Colonic mucosa (tissue), 4 donors: ENCODE measurements at regions of chr19 and their contacts with region 1.

Region 1: DNA sequence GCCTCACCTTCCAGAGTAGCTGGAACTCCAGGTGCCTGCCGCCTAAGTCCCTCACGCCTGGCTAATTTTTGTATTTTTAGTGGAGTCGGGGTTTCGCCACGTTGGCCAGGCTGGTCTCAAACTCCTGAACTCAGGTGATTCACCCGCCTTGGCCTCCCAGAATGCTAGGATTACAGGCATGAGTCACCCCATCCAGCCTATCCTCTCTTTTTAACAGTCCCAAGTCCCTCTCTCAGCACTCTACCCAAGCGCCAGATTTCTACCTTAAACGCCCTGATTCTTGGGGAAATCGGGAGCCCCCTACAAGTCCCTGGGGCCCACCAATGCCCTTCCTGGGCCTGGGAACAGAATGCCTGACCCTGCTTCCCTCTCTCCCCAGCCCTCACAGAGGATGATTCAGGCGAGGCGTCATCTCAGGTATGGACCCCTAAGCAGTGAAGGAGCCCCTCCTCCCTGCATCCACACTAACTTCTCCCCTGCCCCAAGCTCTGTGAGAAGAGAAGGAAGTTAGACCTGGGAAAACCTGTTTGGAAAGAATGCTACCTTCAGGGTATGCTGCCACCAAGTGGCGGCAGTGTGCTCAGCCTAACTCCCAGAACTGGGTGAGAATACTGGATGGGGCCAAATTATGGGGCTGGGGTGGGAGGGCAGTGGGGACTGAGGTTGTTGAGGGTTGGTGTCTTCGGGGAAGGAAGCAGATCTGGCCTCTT is 20.8 kb upstream of the EBI3 start:
- DNase-seq: peak; percentile 49
- H3K4me3 ChIP-seq: no peak overlapping the region
- H3K27ac ChIP-seq: no peak overlapping the region
- H3K4me1 ChIP-seq: no peaks in the 10 kb centered on the region
- H3K27me3 ChIP-seq: no peaks in the 10 kb centered on the region
- CTCF ChIP-seq: no peak

Region 2: GRCh38 chr19:3852614-3853254 is 355.8 kb before region 1 on chr19:
- intact Hi-C with region 1: loop called (anchors 10 kb)
- DNase-seq: peak; percentile 41
- H3K4me3 ChIP-seq: no peak overlapping the region
- H3K27ac ChIP-seq: no peak overlapping the region
- H3K4me1 ChIP-seq: no peaks in the 10 kb centered on the region
- H3K27me3 ChIP-seq: no peaks in the 10 kb centered on the region
- CTCF ChIP-seq: no peak

Region 3: DNA sequence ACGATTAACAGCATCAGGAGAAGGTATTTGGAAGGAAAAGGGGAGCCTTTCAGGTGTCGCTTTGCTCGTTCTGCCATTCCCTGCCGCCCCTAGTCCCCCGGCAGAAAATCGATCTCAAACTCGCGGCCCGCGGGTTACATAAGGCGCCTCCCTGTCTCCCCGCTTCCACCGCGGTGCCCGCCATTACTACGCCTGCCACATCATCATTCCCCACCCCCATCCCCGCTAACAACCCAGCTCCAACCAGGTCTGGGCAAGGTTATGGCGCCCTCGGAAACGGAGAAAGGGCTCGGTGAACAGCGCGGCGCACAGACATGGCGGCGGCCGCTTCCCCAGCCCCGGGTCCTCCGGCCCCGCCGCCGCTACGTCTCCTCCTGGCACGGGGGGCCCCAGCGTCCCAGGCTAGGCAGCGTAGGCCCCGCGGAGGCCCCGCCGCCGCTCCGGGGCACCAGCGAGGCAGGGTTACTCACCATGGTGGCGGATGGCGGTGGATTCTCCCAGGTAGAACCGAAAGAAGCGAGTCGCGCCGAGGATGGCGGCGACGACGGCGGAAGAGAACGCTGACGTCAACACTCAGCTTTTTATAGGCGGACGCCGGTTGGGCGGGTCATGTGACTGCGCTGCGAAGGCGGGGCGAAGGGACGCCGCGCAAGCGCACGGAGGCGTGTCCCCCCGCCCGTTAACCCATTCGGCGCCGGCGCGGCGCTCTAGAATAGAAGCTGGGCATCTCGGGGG is 223.5 kb before region 1 on chr19 and contains the start of gene EEF2:
- intact Hi-C with region 1: loop called (anchors 5 kb)
- DNase-seq: peak; percentile 91
- H3K4me3 ChIP-seq: peak within 1 kb of the TSS; percentile 83
- H3K27ac ChIP-seq: peak within 1 kb of the TSS; percentile 93
- H3K4me1 ChIP-seq: peaks cover 17% of the 10 kb centered on the region
- H3K27me3 ChIP-seq: no peaks in the 10 kb centered on the region
- CTCF ChIP-seq: no peak
- total RNA-seq, gene EEF2: 2,109 to 2,241 TPM

Region 4: DNA sequence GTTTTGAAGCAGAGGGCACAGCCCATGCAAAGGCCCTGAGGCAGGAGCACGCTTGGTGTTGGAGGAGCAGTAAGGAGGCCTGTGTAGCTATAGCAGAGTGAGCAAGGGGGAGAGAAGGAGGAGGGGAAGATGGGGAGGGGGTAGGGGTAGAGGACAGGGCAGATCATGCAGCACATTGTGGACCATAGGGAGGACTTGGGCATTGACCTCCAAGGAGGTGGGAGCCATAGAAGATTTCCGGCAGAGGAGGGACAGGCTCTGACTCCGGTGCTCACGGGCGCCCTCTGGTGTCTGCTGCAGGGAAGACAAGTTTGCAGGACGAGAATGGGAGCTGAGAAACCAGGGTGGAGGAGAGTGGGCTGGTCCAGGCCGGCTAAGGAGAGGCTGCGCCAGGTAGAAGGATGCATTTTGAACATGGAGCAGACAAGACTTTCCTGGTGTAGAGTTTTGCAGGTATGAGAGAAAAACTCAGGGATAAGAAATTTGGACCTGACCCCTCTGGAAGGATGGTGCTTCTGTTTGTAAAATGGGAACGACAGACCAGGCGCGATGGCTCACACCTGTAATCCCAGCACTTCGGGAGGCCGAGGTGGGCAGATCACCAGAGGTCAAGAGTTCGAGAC is 68.8 kb before region 1 on chr19:
- intact Hi-C with region 1: loop called (anchors 2 kb)
- DNase-seq: peak; percentile 97
- H3K4me3 ChIP-seq: no peak overlapping the region
- H3K27ac ChIP-seq: peak overlapping the region; percentile 73
- H3K4me1 ChIP-seq: peaks cover 3% of the 10 kb centered on the region
- H3K27me3 ChIP-seq: no peaks in the 10 kb centered on the region
- CTCF ChIP-seq: peak; percentile 79